Activated B cell treated with CpG ODN at 0.5 μM for 24 hours (primary cell): ENCODE measurements at regions of chr7 and their contacts with region 1.

Region 1: GRCh38 chr7:50335795-50336754 is 31.6 kb downstream of the IKZF1 start:
- DNase-seq: peak; percentile 69
- ATAC-seq: peak; percentile 63
- H3K4me3 Mint-ChIP-seq: peak overlapping the region; percentile 74
- H3K27ac Mint-ChIP-seq: no peak overlapping the region
- H3K4me1 Mint-ChIP-seq: peaks cover 2% of the 10 kb centered on the region
- H3K27me3 Mint-ChIP-seq: no peaks in the 10 kb centered on the region
- CTCF ChIP-seq: no peak

Region 2: DNA sequence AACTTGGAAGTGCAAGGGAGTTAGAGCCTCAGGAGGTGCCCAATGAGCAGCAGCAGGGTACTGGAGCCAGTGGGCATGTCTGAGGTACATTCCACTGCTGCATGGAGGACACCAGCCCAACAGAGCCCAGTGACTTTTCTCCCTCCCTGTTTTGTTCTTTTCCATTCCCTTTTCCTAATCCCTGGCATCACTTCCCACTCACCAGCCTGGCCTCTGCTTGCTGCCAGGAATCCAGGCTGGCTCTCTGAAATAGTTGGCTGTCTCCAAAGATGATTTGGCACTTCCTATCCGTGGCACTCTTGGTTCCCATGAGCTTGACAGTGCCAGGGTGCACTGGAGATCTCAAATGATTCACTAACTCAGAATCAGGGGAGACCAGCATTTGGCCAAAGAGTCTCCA is 145.3 kb before region 1 on chr7:
- CTCF ChIA-PET with region 1: no interaction called
- POLR2A ChIA-PET with region 1: no interaction called
- intact Hi-C with region 1: no loop called
- DNase-seq: no peak
- ATAC-seq: no peak
- H3K4me3 Mint-ChIP-seq: no peak overlapping the region
- H3K27ac Mint-ChIP-seq: no peak overlapping the region
- H3K4me1 Mint-ChIP-seq: peaks cover 10% of the 10 kb centered on the region
- H3K27me3 Mint-ChIP-seq: no peaks in the 10 kb centered on the region
- CTCF ChIP-seq: no peak

Region 3: GRCh38 chr7:50212666-50213621 is 123.1 kb before region 1 on chr7:
- CTCF ChIA-PET with region 1: interaction called, 4 read pairs
- POLR2A ChIA-PET with region 1: interaction called, 6 read pairs
- intact Hi-C with region 1: loop called (anchors 2 kb)
- DNase-seq: no peak
- ATAC-seq: peak; percentile 91
- H3K4me3 Mint-ChIP-seq: peak overlapping the region; percentile 70
- H3K27ac Mint-ChIP-seq: peak overlapping the region; percentile 84
- H3K4me1 Mint-ChIP-seq: peaks cover 63% of the 10 kb centered on the region
- H3K27me3 Mint-ChIP-seq: no peaks in the 10 kb centered on the region
- CTCF ChIP-seq: no peak

Region 4: GRCh38 chr7:50272808-50273207 is 63.3 kb before region 1 on chr7:
- CTCF ChIA-PET with region 1: interaction called, 3 read pairs
- POLR2A ChIA-PET with region 1: interaction called, 10 read pairs
- intact Hi-C with region 1: no loop called
- DNase-seq: no peak
- ATAC-seq: peak; percentile 43
- H3K4me3 Mint-ChIP-seq: peak overlapping the region; percentile 12
- H3K27ac Mint-ChIP-seq: peak overlapping the region; percentile 82
- H3K4me1 Mint-ChIP-seq: peaks cover 99% of the 10 kb centered on the region
- H3K27me3 Mint-ChIP-seq: no peaks in the 10 kb centered on the region
- CTCF ChIP-seq: no peak

Region 5: DNA sequence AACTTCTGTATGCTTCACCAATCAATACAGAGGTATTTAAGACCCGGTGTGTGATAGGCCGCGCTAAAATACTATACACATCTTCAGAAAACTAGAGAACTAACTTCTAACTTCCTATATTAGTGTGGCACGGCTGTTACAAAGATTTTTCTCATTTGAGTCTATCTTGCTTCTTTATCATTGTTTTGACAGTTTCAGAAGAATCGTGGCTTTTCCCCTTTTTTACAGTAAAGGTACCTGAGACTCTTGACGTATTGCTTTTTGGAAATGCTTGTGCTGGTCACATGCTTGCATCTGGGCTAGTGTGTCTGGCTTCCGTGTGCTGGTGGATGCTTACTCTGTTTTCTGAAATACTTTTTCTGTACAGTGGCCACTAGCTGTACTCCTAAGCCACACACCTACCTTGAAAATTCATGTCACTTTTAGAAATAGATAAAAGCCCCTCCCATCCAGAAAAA is 18.8 kb before region 1 on chr7:
- CTCF ChIA-PET with region 1: interaction called, 6 read pairs
- POLR2A ChIA-PET with region 1: interaction called, 188 read pairs
- intact Hi-C with region 1: no loop called
- DNase-seq: no peak
- ATAC-seq: peak; percentile 63
- H3K4me3 Mint-ChIP-seq: peak overlapping the region; percentile 74
- H3K27ac Mint-ChIP-seq: peak overlapping the region; percentile 96
- H3K4me1 Mint-ChIP-seq: peaks cover 96% of the 10 kb centered on the region
- H3K27me3 Mint-ChIP-seq: no peaks in the 10 kb centered on the region
- CTCF ChIP-seq: no peak

Region 6: DNA sequence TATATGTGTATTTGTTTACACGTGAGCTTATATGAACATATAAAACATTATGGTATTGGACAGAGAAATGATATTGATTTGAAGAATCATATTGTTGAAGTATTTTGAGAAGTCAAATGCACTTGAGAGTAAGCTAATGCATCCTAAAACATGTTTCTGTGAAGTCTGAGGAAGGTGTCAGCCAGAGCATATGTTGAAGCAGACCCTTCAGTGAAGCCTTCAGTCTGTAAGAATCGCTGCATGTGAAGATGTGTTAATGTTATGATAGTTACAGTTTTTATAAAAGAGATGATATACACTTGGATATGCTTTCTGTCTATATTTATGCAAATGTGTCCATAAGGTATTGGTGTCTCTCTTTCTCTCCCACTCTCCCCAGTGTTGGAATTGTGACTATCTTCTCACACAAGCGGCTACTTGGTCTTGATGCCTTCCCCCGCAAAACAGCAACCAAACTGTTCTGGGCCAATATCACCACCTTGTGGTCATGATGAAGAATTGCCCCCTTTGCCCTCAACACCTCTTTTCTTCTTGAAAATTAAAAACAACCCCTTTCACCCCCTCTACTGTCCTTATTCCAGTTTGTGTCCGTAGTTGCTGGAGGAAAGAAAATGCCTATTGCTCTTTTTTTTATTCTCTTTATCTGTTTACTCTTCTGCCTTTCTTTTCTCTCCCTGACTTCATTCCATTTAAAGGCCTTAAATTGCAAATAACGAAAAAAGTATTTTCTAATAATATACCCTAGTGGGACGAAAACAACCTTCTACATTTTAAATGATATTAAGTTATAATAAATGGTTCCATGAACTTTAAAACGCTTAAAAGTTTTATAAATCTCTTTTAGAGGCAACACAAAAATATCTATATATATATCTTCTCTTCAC is 33.3 kb after region 1 on chr7:
- CTCF ChIA-PET with region 1: interaction called, 15 read pairs
- POLR2A ChIA-PET with region 1: interaction called, 15 read pairs
- intact Hi-C with region 1: loop called (anchors 2 kb)
- DNase-seq: no peak
- ATAC-seq: peak; percentile 66
- H3K4me3 Mint-ChIP-seq: no peak overlapping the region
- H3K27ac Mint-ChIP-seq: peak overlapping the region; percentile 74
- H3K4me1 Mint-ChIP-seq: peaks cover 94% of the 10 kb centered on the region
- H3K27me3 Mint-ChIP-seq: no peaks in the 10 kb centered on the region
- CTCF ChIP-seq: peak; percentile 50

Region 7: DNA sequence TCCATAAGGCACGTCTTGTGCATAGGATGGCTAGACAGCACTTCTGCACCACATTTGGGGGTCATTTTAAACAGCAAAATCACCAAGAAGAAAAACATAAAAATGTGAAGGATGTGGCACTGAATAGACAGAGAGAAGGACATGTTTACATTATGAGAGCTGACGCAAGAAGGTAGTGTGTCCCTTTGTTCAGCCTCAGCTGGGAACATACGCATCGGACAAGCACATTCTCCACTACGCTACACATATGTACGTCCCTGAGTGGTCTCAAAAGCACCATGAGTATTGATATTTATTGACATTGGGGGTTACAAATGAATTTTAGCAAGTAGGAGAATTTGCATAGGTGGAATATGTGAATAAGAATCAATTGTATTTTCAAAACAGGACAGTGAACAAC is 208.9 kb after region 1 on chr7:
- CTCF ChIA-PET with region 1: no interaction called
- POLR2A ChIA-PET with region 1: no interaction called
- intact Hi-C with region 1: no loop called
- DNase-seq: no peak
- ATAC-seq: no peak
- H3K4me3 Mint-ChIP-seq: no peak overlapping the region
- H3K27ac Mint-ChIP-seq: no peak overlapping the region
- H3K4me1 Mint-ChIP-seq: no peaks in the 10 kb centered on the region
- H3K27me3 Mint-ChIP-seq: no peaks in the 10 kb centered on the region
- CTCF ChIP-seq: no peak

Region 8: GRCh38 chr7:50962962-50963374 is 626.9 kb after region 1 on chr7:
- CTCF ChIA-PET with region 1: no interaction called
- POLR2A ChIA-PET with region 1: no interaction called
- intact Hi-C with region 1: no loop called
- DNase-seq: no peak
- ATAC-seq: no peak
- H3K4me3 Mint-ChIP-seq: no peak overlapping the region
- H3K27ac Mint-ChIP-seq: no peak overlapping the region
- H3K4me1 Mint-ChIP-seq: no peaks in the 10 kb centered on the region
- H3K27me3 Mint-ChIP-seq: no peaks in the 10 kb centered on the region
- CTCF ChIP-seq: no peak